CD14-positive monocyte (primary cell): ENCODE measurements at regions of chrX and their contacts with region 1.

Region 1: DNA sequence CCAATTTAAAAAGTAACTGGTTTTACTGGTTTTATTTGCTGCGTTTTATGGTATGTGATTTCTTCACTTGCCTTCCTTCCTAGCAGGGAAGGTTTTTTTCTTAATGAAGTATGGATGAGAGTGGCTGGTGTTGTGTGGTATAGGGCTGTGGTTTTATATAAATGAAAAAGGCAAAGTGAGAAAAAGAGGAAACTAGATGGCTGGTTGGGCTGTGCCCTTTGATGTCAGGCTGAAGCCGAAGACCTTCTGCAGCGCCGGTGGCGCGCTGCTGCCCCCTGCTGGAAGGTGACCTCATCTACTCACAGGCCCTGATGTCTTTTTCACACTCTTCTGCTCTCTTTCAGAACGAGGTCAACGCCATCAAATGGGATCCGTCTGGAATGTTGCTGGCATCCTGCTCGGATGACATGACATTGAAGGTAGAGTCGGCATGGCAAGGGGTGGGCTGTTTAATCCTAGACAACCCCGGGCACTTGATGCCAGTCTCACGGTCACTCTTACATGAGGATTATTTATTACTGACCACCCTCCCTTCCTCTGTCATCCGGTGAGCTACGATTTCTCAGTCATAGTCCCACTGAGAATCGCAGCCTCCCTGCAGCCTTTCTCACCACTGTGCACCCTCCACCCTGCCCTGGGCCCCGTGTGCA is 56.6 kb downstream of the GPR143 start:
- DNase-seq: peak; percentile 69 to 77 (median 70)
- H3K4me3 ChIP-seq: no peak overlapping the region
- H3K4me3 Mint-ChIP-seq: no peak overlapping the region
- H3K27ac ChIP-seq: no peak overlapping the region
- H3K27ac Mint-ChIP-seq: peak overlapping the region in 1 of 7 donors; percentile 45
- H3K4me1 ChIP-seq: peaks cover 0 to 7% of the 10 kb centered on the region in 2 donors
- H3K4me1 Mint-ChIP-seq: peaks cover 7% of the 10 kb centered on the region
- H3K27me3 ChIP-seq: no peaks in the 10 kb centered on the region
- H3K27me3 Mint-ChIP-seq: peaks cover 0 to 7% (median 0%) of the 10 kb centered on the region in 3 donors
- CTCF ChIP-seq: peak; percentile 74

Region 2: GRCh38 chrX:8743126-8743732 is 965.8 kb before region 1 on chrX:
- intact Hi-C with region 1: loop called in 1 of 2 experiments (anchors 10 kb)
- DNase-seq: peak; percentile 26 to 33 (median 27)
- H3K4me3 ChIP-seq: no peak overlapping the region
- H3K4me3 Mint-ChIP-seq: no peak overlapping the region
- H3K27ac ChIP-seq: no peak overlapping the region
- H3K27ac Mint-ChIP-seq: no peak overlapping the region
- H3K4me1 ChIP-seq: no peaks in the 10 kb centered on the region
- H3K4me1 Mint-ChIP-seq: no peaks in the 10 kb centered on the region
- H3K27me3 ChIP-seq: no peaks in the 10 kb centered on the region
- H3K27me3 Mint-ChIP-seq: peaks cover 8 to 15% (median 10%) of the 10 kb centered on the region in 3 donors
- CTCF ChIP-seq: peak; percentile 74

Region 3: GRCh38 chrX:8815464-8816065 is 893.5 kb before region 1 on chrX:
- intact Hi-C with region 1: loop called in 1 of 2 experiments (anchors 5 kb)
- DNase-seq: peak; percentile 7 to 25 (median 13)
- H3K4me3 ChIP-seq: no peak overlapping the region
- H3K4me3 Mint-ChIP-seq: no peak overlapping the region
- H3K27ac ChIP-seq: no peak overlapping the region
- H3K27ac Mint-ChIP-seq: no peak overlapping the region
- H3K4me1 ChIP-seq: no peaks in the 10 kb centered on the region
- H3K4me1 Mint-ChIP-seq: no peaks in the 10 kb centered on the region
- H3K27me3 ChIP-seq: peaks cover 0 to 3% of the 10 kb centered on the region in 2 donors
- H3K27me3 Mint-ChIP-seq: peaks cover 0 to 7% (median 1%) of the 10 kb centered on the region in 3 donors
- CTCF ChIP-seq: peak; percentile 58

Region 4: DNA sequence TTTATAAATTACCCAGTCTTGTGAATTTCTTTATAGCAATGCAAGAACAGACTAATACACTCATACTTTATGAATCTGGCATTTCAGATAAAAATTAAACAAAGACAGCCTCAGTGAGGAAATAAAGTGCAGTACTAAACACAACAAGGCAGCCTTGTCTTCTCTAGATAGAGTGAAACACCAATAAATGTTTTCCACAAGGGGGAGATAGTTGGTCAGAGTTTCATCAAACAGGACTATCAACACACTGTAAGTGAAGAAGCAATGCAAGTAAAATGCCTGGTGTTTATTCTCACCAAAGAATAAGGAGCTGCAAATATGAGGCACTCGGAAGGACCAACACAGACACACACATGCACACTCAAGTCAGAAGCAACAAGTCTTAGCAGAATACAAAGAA is 737.9 kb before region 1 on chrX:
- intact Hi-C with region 1: loop called (anchors 5 kb)
- DNase-seq: peak; percentile 10 to 25 (median 15)
- H3K4me3 ChIP-seq: no peak overlapping the region
- H3K4me3 Mint-ChIP-seq: no peak overlapping the region
- H3K27ac ChIP-seq: no peak overlapping the region
- H3K27ac Mint-ChIP-seq: no peak overlapping the region
- H3K4me1 ChIP-seq: no peaks in the 10 kb centered on the region
- H3K4me1 Mint-ChIP-seq: no peaks in the 10 kb centered on the region
- H3K27me3 ChIP-seq: peaks cover 4 to 6% of the 10 kb centered on the region in 2 donors
- H3K27me3 Mint-ChIP-seq: peaks cover 10 to 23% (median 22%) of the 10 kb centered on the region in 3 donors
- CTCF ChIP-seq: peak; percentile 33